ENCODE measurements at regions of chr6 and their contacts with region 1.

Region 1: GRCh38 chr6:129490521-129491245 is 219.3 kb downstream of the ARHGAP18 start:
- DNase-seq: peak; percentile 69
- H3K4me3 Mint-ChIP-seq: peak overlapping the region; percentile 77
- H3K27ac Mint-ChIP-seq: peak overlapping the region; percentile 99
- H3K4me1 Mint-ChIP-seq: peaks cover 68% of the 10 kb centered on the region
- H3K27me3 Mint-ChIP-seq: no peaks in the 10 kb centered on the region

Region 2: DNA sequence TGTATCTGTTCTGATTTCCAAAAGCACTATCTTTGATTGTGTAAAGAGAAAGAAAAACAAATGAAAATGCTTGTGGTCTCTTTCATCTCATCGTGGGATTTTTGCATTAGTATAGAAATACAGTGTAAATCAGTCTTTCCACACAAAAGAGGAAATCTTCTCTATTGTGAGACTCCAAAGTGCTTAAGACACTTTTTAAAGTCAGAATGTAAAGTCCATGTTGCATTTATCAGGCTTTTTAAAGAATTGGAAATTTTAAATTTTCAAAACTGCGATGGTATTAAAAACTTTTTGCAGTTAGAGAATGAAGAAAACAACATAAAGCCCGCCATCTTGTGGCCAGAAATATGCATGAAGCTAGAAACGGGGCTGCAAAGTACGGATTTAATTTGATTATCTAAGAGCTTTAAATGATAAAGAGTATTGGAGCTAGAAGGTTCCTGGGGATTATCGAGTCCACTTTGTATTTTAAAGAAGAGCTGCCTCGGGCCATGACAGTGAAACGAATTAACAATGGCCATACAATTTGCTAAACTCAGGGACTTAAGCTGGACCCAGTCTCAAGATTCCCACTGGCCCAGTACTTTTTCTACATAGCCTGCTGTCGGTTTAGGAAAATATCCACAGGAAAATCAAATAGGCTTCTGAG is 120.3 kb before region 1 on chr6:
- intact Hi-C with region 1: loop called (anchors 5 kb)
- DNase-seq: no peak
- H3K4me3 Mint-ChIP-seq: no peak overlapping the region
- H3K27ac Mint-ChIP-seq: no peak overlapping the region
- H3K4me1 Mint-ChIP-seq: peaks cover 7% of the 10 kb centered on the region
- H3K27me3 Mint-ChIP-seq: no peaks in the 10 kb centered on the region

Region 3: GRCh38 chr6:129472239-129472638 is 18.4 kb before region 1 on chr6:
- intact Hi-C with region 1: loop called (anchors 2 kb)
- DNase-seq: no peak
- H3K4me3 Mint-ChIP-seq: no peak overlapping the region
- H3K27ac Mint-ChIP-seq: no peak overlapping the region
- H3K4me1 Mint-ChIP-seq: no peaks in the 10 kb centered on the region
- H3K27me3 Mint-ChIP-seq: peaks cover 8% of the 10 kb centered on the region

Region 4: GRCh38 chr6:129748212-129748900 is 257.7 kb after region 1 on chr6:
- intact Hi-C with region 1: loop called (anchors 2 kb)
- DNase-seq: peak; percentile 37
- H3K4me3 Mint-ChIP-seq: peak overlapping the region; percentile 63
- H3K27ac Mint-ChIP-seq: peak overlapping the region; percentile 63
- H3K4me1 Mint-ChIP-seq: peaks cover 46% of the 10 kb centered on the region
- H3K27me3 Mint-ChIP-seq: no peaks in the 10 kb centered on the region